ENCODE measurements at regions of chr18 and their contacts with region 1.

Region 1: GRCh38 chr18:66560092-66560491 is 43.8 kb downstream of the CDH19 start:
- DNase-seq: peak; percentile 61
- H3K4me3 Mint-ChIP-seq: no peak overlapping the region
- H3K27ac Mint-ChIP-seq: no peak overlapping the region
- H3K4me1 Mint-ChIP-seq: no peaks in the 10 kb centered on the region
- H3K27me3 Mint-ChIP-seq: peaks cover 40% of the 10 kb centered on the region
- CTCF ChIP-seq: peak; percentile 54

Region 2: GRCh38 chr18:66749030-66749429 is 188.9 kb after region 1 on chr18:
- CTCF ChIA-PET with region 1: interaction called, 3 read pairs
- POLR2A ChIA-PET with region 1: no interaction called
- intact Hi-C with region 1: loop called (anchors 5 kb)
- DNase-seq: peak; percentile 30
- H3K4me3 Mint-ChIP-seq: no peak overlapping the region
- H3K27ac Mint-ChIP-seq: no peak overlapping the region
- H3K4me1 Mint-ChIP-seq: no peaks in the 10 kb centered on the region
- H3K27me3 Mint-ChIP-seq: peaks cover 18% of the 10 kb centered on the region
- CTCF ChIP-seq: no peak

Region 3: GRCh38 chr18:66872277-66872676 is 312.2 kb after region 1 on chr18:
- CTCF ChIA-PET with region 1: interaction called, 5 read pairs
- POLR2A ChIA-PET with region 1: interaction called, 5 read pairs
- intact Hi-C with region 1: loop called (anchors 1 kb)
- DNase-seq: peak; percentile 24
- H3K4me3 Mint-ChIP-seq: no peak overlapping the region
- H3K27ac Mint-ChIP-seq: no peak overlapping the region
- H3K4me1 Mint-ChIP-seq: no peaks in the 10 kb centered on the region
- H3K27me3 Mint-ChIP-seq: peaks cover 31% of the 10 kb centered on the region
- CTCF ChIP-seq: peak; percentile 34

Region 4: GRCh38 chr18:67199993-67200617 is 640.0 kb after region 1 on chr18:
- CTCF ChIA-PET with region 1: no interaction called
- POLR2A ChIA-PET with region 1: no interaction called
- intact Hi-C with region 1: loop called (anchors 5 kb)
- DNase-seq: peak; percentile 65
- H3K4me3 Mint-ChIP-seq: no peak overlapping the region
- H3K27ac Mint-ChIP-seq: no peak overlapping the region
- H3K4me1 Mint-ChIP-seq: no peaks in the 10 kb centered on the region
- H3K27me3 Mint-ChIP-seq: peaks cover 79% of the 10 kb centered on the region
- CTCF ChIP-seq: peak; percentile 53

Measured in MCF 10A (cell line).